ENCODE measurements at regions of chr17 and their contacts with region 1.

Region 1: DNA sequence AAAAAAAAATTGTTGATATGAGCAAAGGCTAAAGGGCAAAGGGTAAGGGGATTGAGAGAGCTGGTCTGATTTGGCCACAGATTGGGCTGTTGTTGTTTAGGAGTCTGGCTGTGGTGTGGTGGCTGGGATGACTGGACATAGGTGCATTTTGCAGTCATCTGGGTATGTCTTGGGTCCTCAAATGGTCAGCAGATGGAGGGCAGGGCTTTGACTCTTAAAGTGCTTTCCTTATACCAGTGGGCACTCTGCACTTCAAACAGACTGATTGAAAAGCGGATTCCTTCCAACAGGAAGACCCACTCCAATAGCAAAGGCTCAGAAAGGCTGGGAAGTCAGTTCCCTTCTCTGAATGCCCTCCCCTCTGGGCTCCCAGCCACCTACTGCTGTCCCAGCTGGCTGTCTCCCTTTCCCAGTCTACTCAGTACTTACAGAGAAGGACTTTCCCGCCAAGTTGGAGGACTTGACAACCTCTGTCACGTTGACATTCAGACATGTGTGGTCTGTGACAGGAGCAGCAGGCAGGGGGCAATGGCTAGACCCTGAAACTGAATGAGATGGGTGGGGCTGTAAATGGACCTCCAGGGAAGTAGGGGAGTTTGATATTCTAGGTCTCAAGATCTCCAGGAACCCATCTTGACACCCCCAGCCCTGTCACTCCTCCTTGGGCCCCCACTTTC is 19.6 kb upstream of the MFSD6L start:
- DNase-seq: no peak
- ATAC-seq: no peak
- H3K4me3 ChIP-seq: no peak overlapping the region
- H3K27ac ChIP-seq: no peak overlapping the region
- H3K4me1 ChIP-seq: no peaks in the 10 kb centered on the region
- H3K27me3 ChIP-seq: no peaks in the 10 kb centered on the region

Region 2: DNA sequence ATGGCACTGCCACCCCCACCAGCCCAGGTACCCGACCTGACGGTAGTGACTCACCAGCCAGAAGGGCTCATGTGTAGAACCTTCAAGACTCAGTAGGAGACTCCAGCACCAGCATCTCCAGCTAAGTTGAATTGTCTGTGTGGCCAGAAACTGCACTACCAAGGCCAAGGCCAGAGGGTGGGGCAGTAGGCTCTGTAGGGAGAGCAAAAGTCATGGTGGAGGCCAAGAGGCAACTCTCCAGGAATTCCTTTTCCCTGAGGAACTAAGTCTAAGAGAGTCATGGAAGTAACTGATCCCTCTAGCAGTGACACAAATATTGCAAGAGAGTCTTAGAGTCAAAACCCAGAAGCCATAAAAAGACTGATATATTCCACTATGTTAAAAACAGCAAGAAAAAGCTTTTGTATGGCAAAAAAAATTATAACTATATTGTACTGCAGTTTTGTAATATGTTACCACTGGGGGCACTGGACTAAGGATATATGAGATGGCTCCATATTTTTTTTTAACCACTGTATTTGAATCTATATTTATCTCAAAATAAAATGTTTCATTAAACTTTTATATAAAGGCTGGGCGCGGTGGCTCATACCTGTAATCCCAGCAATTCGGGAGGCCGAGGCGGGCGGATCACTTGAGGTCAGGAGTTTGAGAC is 846.5 kb before region 1 on chr17:
- intact Hi-C with region 1: loop called in 1 of 2 experiments (anchors 10 kb)
- DNase-seq: no peak
- ATAC-seq: no peak
- H3K4me3 ChIP-seq: no peak overlapping the region
- H3K27ac ChIP-seq: no peak overlapping the region
- H3K4me1 ChIP-seq: no peaks in the 10 kb centered on the region
- H3K27me3 ChIP-seq: no peaks in the 10 kb centered on the region

Measured in aorta (tissue), 5 donors.